Vagina (tissue), 2 donors: ENCODE measurements at regions of chr10 and their contacts with region 1.

Region 1: DNA sequence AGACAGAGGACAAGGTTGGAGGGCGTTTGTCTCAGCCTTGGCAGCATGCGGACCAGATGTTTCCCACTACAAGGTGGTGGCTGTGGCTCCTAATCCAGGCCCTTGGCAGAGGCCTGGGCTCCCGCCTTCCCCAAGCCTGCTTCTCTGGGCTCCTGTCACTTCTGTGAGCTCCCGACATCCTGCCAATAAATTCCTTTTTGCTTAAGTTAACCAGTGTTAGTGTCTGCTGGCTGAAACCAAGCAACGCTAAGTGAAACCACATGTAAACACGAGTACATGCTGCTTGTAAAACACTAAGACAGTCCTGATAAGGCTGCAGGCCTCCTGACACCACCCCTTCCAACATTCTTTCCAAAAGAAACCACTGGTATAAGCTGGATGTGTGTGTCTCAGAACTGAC is 263.6 kb upstream of the ZMIZ1 start:
- DNase-seq: no peak
- H3K4me3 ChIP-seq: no peak overlapping the region
- H3K27ac ChIP-seq: peak overlapping the region; percentile 81
- H3K4me1 ChIP-seq: peaks cover 87% of the 10 kb centered on the region
- H3K27me3 ChIP-seq: no peaks in the 10 kb centered on the region
- CTCF ChIP-seq: no peak
- POLR2A ChIP-seq: no peak

Region 2: GRCh38 chr10:78784546-78784945 is 20.6 kb before region 1 on chr10:
- intact Hi-C with region 1: loop called (anchors 2 kb)
- DNase-seq: no peak
- H3K4me3 ChIP-seq: no peak overlapping the region
- H3K27ac ChIP-seq: peak overlapping the region; percentile 41
- H3K4me1 ChIP-seq: peaks cover 24% of the 10 kb centered on the region
- H3K27me3 ChIP-seq: no peaks in the 10 kb centered on the region
- CTCF ChIP-seq: no peak
- POLR2A ChIP-seq: no peak